Activated CD4-positive, alpha-beta T cell treated with anti-CD3 and anti-CD28 coated beads for 36 hours (primary cell): ENCODE measurements at regions of chr16 and their contacts with region 1.

Region 1: GRCh38 chr16:3123986-3124886 is 10.6 kb upstream of the ZNF213 start:
- DNase-seq: peak; percentile 99
- ATAC-seq: peak; percentile 92
- H3K4me3 Mint-ChIP-seq: peak overlapping the region; percentile 90
- H3K27ac Mint-ChIP-seq: peak overlapping the region; percentile 90
- H3K4me1 Mint-ChIP-seq: peaks cover 30% of the 10 kb centered on the region
- H3K27me3 Mint-ChIP-seq: no peaks in the 10 kb centered on the region

Region 2: DNA sequence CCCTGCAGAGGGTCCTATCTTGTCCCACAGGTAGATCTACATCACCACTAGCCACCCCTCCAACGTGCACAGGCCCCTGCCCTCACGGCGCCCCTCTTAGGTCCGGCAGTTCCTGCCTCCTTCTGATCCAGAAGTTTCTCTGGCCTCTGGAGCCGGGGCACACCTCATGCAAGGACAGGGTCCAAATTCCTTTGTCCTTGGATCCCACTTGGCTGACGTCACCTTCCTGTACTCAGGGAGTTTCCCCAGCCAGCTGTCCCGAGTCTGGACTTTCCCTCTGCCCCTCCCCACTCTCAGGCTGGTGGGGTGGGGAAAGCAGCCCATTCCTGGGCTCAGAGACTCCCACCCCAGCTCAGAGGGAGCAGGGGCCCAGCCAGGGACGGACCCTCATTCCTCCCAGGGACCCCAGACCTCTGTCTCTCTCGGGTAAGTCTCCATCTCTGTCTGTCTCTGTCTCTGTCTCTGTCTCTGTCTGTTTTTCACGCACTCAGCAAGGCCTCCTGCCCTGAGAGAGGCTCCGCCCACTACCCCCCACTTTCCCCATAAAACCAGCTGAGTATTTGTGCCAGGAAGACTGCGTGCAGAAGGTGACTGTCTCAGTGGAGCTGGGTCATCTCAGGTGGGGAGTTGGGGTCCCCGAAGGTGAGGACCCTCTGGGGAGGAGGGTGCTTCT is 59.0 kb before region 1 on chr16 and contains the start of gene IL32:
- CTCF ChIA-PET with region 1: interaction called, 83 read pairs
- POLR2A ChIA-PET with region 1: no interaction called
- intact Hi-C with region 1: loop called in 1 of 2 experiments (anchors 1 kb)
- DNase-seq: peak; percentile 90
- ATAC-seq: peak; percentile 62
- H3K4me3 Mint-ChIP-seq: peak within 1 kb of the TSS; percentile 100
- H3K27ac Mint-ChIP-seq: peak within 1 kb of the TSS; percentile 100
- H3K4me1 Mint-ChIP-seq: peaks cover 64% of the 10 kb centered on the region
- H3K27me3 Mint-ChIP-seq: no peaks in the 10 kb centered on the region
- total RNA-seq, gene IL32: 1,864 to 2,360 TPM

Region 3: DNA sequence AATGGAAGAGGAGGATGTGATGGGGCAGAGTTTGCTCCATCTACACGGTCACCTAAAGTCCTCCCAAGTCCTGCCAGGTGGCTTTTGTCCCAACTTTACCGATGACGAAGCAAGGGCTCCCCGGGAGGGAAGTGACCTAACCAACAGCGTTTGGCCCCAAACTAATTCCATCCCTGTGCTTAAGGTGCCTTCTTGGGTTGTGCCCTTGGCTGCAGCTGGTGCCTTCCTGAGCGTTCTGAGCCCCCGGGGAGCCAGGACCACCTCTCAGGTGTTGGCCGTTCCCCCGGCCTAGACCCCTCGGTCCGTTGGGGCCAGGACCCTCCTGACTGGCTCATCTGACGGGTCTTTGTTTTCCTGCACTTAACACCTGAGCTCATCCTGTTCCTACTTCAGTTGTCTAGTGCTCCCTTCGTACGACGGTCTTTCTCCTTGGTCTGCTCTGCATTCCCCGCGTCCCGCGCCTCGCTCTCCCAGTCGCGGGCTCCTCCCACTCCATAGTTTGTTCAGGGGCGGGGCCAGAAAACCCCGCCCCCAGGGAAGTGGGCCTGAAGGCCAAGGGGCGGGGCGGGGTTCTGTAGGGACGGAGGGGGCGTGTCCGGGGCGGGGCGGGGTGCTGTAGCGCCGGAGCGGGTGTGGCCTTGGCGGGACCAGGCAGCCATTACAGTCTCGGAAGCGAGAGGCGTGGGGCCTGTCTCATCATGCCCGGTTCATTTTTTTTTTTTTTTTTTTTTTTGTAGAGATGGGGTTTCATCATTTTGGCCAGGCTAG is 24.3 kb before region 1 on chr16:
- CTCF ChIA-PET with region 1: interaction called, 125 read pairs
- POLR2A ChIA-PET with region 1: no interaction called
- intact Hi-C with region 1: loop called (anchors 1 kb)
- DNase-seq: peak; percentile 99
- ATAC-seq: peak; percentile 84
- H3K4me3 Mint-ChIP-seq: peak overlapping the region; percentile 68
- H3K27ac Mint-ChIP-seq: peak overlapping the region; percentile 84
- H3K4me1 Mint-ChIP-seq: peaks cover 49% of the 10 kb centered on the region
- H3K27me3 Mint-ChIP-seq: no peaks in the 10 kb centered on the region

Region 4: DNA sequence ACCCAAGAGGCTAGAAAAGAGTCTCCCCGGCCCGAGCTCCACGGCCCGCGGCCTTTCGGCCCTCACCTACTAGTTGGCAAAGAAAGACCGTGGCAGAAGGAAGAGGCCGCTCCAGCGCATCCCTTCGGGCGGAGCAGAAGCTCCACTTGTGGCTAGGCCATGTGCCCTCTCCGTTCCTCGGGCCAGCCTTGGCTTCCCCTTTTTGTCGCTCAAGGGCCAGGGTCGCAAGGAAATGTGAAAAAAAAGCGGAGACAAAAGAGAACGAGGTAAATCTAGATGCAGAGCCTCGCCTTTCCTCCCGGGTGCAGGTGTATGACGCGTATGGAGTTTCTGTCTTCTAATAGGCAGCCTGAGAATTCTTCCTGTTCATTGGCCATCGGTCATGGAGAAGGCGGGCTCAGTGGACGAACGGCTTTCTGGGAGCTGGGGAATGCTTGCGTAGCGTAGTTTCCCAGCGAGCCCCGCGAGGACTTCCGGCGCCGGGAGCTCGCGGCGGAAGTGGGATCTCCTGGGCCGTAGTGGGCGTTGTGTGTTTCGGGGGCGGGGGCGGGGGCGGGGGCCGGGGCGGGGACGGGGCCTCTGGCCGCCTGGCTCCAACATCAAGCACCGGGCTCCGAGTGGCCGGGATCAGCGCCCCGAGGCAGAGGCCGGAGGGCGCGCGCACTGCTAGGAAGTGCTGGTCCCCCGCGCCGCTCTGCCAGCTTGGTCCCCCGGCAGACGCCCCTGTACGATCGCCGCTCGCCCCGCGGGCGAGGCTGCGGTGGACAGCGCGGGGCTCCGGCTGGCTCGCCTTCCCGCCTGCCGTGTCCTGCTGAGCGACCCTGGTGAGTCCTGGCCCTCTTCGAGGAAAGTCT is 10.6 kb after region 1 on chr16 and contains the start of gene ZNF213:
- CTCF ChIA-PET with region 1: interaction called, 12 read pairs
- POLR2A ChIA-PET with region 1: interaction called, 7 read pairs
- intact Hi-C with region 1: loop called in 1 of 2 experiments (anchors 1 kb)
- DNase-seq: peak; percentile 96
- ATAC-seq: peak; percentile 97
- H3K4me3 Mint-ChIP-seq: peak within 1 kb of the TSS; percentile 98
- H3K27ac Mint-ChIP-seq: peak within 1 kb of the TSS; percentile 95
- H3K4me1 Mint-ChIP-seq: peaks cover 30% of the 10 kb centered on the region
- H3K27me3 Mint-ChIP-seq: no peaks in the 10 kb centered on the region
- total RNA-seq, gene ZNF213: 7.6 to 8.3 TPM

Region 5: DNA sequence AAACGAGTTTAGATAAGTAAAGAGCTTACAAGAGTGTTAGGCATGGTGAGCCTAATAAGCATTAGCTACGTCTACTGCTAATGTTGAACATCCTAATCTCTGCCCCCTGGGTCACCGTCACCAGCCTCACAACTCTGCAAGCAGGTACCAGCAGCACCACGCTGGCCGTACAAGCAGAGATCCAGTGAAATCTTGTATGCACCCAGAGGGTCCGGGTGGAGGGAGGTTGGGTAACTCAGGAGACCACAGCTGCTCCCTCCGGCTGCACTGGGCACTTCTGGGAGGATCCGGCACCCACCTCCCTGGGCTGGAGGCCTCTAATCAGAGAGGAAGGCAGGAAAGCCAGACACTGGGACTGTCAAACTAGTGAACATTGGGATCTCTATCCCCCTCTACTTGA is 55.4 kb after region 1 on chr16:
- CTCF ChIA-PET with region 1: no interaction called
- POLR2A ChIA-PET with region 1: no interaction called
- intact Hi-C with region 1: no loop called
- DNase-seq: no peak
- ATAC-seq: no peak
- H3K4me3 Mint-ChIP-seq: no peak overlapping the region
- H3K27ac Mint-ChIP-seq: no peak overlapping the region
- H3K4me1 Mint-ChIP-seq: peaks cover 25% of the 10 kb centered on the region
- H3K27me3 Mint-ChIP-seq: peaks cover 72% of the 10 kb centered on the region